Activated CD4-positive, alpha-beta T cell treated with anti-CD3 and anti-CD28 coated beads, Interleukin-2, amount 10 ng/mL, durations not matched to agents 24 days and 14 days (primary cell): ENCODE measurements at regions of chr4 and their contacts with region 1.

Region 1: DNA sequence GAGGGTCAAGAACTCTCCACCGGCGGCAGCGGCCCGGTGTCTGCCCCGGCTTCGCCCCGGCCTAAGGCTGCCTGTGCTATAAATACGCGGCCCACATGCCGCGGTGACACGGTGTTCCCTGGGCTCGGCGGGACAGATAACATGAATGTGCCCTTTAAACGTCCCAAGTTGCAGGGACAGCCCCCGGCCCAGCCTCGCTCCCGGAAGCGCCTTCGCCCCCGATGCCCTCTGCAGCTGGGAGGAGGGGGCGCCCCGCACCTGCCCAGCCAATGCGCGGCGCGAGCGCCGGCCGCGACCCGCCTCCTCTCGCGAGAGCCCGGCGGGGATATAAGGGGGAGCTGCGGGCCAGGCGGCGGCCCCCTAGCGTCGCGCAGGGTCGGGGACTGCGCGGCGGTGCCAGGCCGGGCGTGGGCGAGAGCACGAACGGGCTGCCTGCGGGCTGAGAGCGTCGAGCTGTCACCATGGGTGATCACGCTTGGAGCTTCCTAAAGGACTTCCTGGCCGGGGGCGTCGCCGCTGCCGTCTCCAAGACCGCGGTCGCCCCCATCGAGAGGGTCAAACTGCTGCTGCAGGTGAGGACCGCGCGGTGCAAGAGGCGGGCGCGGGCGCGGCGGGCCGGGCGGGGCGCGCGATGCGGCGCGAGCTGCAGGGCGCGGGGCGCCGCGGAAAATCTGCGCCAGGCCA is at the start of gene SLC25A4:
- DNase-seq: peak; percentile 89
- H3K4me3 Mint-ChIP-seq: peak within 1 kb of the TSS; percentile 86
- H3K27ac Mint-ChIP-seq: peak within 1 kb of the TSS; percentile 65
- H3K4me1 Mint-ChIP-seq: peaks cover 7% of the 10 kb centered on the region
- H3K27me3 Mint-ChIP-seq: peaks cover 65% of the 10 kb centered on the region
- total RNA-seq, gene SLC25A4: 1.7 and 1.9 TPM in 2 replicates

Region 2: DNA sequence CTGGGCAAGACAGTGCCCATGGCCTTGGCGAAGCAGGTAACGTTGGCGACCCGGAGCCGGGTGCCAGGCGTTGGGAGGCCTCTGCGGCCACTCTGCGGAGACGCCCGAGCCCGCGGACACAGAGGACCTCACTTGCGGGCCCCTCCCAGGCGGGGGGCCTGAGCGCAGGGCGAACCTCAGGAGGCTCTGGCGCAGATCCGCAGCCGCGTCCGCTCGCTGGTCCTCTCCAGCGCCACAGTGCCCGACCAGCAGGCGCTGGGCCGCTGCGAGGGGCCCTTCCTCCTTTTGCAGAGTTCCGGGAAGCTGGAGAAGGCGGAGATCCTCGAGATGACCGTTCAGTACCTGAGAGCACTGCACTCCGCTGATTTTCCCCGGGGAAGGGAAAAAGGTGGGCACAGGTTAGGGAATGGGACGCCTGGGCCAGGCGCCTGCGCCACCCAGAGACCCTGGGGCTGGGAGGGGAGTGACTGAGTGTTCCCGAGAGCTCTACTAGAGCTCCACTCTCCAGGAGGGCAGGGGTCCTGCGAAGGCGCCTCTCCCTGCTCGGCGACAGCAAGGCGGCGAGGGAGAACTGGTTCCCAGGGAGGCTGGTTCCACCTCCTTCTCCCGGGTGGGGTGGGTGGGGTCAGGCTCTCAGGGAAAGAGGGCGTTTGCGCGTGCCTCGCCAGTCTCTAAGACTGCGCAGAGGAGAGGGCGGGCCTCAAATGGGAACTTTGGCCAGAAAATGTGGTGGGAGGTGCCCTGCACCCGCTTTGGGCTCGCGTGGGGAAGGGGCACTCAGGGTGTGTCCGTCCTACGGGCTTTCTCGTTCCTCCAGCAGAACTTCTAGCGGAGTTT is 123.4 kb before region 1 on chr4:
- intact Hi-C with region 1: loop called (anchors 5 kb)
- DNase-seq: no peak
- H3K4me3 Mint-ChIP-seq: no peak overlapping the region
- H3K27ac Mint-ChIP-seq: no peak overlapping the region
- H3K4me1 Mint-ChIP-seq: peaks cover 5% of the 10 kb centered on the region
- H3K27me3 Mint-ChIP-seq: peaks cover 86% of the 10 kb centered on the region

Region 3: DNA sequence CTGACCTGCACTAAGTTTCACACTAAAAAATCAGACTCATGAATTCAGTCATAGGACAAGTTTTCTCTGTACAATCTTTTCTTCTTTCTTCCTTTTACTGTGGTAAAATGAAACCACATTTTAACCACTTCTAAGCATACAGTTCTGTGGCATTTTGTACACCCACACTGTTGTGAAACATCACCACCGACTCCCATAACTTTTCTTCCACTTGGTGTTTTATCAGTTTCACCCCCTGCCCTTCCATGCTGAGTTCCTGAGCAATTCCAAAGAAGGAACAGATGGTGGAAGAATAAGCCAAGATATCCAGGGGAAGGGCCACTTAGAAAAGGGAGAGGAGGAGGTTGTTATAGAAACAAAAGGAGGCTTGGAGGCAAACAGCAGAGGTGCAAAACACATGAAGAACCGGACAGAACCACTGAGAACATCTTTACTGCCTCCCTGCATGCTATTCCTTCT is 22.6 kb after region 1 on chr4:
- intact Hi-C with region 1: loop called (anchors 1 kb)
- DNase-seq: peak; percentile 76
- H3K4me3 Mint-ChIP-seq: peak overlapping the region; percentile 20
- H3K27ac Mint-ChIP-seq: peak overlapping the region; percentile 85
- H3K4me1 Mint-ChIP-seq: peaks cover 14% of the 10 kb centered on the region
- H3K27me3 Mint-ChIP-seq: peaks cover 18% of the 10 kb centered on the region

Region 4: GRCh38 chr4:185183619-185184281 is 40.7 kb after region 1 on chr4:
- intact Hi-C with region 1: loop called (anchors 5 kb)
- DNase-seq: peak; percentile 92
- H3K4me3 Mint-ChIP-seq: no peak overlapping the region
- H3K27ac Mint-ChIP-seq: no peak overlapping the region
- H3K4me1 Mint-ChIP-seq: peaks cover 9% of the 10 kb centered on the region
- H3K27me3 Mint-ChIP-seq: no peaks in the 10 kb centered on the region